ENCODE measurements at regions of chr16 and their contacts with region 1.

Region 1: DNA sequence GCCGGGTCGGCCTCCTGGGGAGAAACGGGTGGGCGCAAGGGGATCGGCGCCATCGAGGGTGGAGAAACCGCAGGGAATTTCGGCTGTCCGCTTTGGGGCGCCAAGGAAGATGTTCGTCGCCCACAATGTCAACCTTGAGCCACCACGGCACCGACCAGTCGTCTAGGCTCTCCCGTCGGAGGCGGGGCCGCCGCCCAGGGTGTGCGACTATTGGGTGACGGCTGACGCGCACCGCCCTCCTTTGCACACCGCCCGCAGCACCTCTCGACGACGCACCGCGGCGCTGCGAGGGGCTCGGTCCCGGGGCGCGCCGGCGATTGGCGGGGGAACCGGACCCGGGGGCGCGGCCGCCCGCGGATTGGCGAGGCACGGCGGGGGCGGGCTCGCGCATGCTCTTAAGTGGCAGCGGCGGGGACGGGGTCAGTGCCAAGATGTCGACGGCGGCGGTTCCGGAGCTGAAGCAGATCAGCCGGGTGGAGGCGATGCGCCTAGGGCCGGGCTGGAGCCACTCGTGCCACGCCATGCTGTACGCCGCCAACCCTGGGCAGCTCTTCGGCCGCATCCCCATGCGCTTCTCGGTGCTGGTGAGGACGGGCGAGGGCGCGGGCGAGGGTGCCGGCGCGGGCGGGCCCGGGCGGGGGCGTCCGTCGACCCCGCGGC is at the start of gene NUDT16L1:
- DNase-seq: peak; percentile 98
- ATAC-seq: peak; percentile 95
- H3K4me3 Mint-ChIP-seq: peak within 1 kb of the TSS; percentile 77
- H3K27ac Mint-ChIP-seq: peak within 1 kb of the TSS; percentile 83
- H3K4me1 Mint-ChIP-seq: peaks cover 17% of the 10 kb centered on the region
- H3K27me3 Mint-ChIP-seq: no peaks in the 10 kb centered on the region
- total RNA-seq, gene NUDT16L1: 16.4 to 22.5 TPM

Region 2: GRCh38 chr16:4494746-4495490 is 198.5 kb before region 1 on chr16:
- CTCF ChIA-PET with region 1: no interaction called
- POLR2A ChIA-PET with region 1: no interaction called
- intact Hi-C with region 1: no loop called
- DNase-seq: no peak
- ATAC-seq: no peak
- H3K4me3 Mint-ChIP-seq: no peak overlapping the region
- H3K27ac Mint-ChIP-seq: peak overlapping the region; percentile 14
- H3K4me1 Mint-ChIP-seq: peaks cover 77% of the 10 kb centered on the region
- H3K27me3 Mint-ChIP-seq: no peaks in the 10 kb centered on the region

Region 3: GRCh38 chr16:4660454-4661007 is 32.9 kb before region 1 on chr16:
- CTCF ChIA-PET with region 1: interaction called, 3 read pairs
- POLR2A ChIA-PET with region 1: interaction called, 3 read pairs
- intact Hi-C with region 1: loop called in 1 of 2 experiments (anchors 1 kb)
- DNase-seq: peak; percentile 94
- ATAC-seq: peak; percentile 82
- H3K4me3 Mint-ChIP-seq: no peak overlapping the region
- H3K27ac Mint-ChIP-seq: peak overlapping the region; percentile 68
- H3K4me1 Mint-ChIP-seq: peaks cover 70% of the 10 kb centered on the region
- H3K27me3 Mint-ChIP-seq: no peaks in the 10 kb centered on the region

Region 4: GRCh38 chr16:4679850-4680636 is 13.4 kb before region 1 on chr16:
- CTCF ChIA-PET with region 1: interaction called, 6 read pairs
- POLR2A ChIA-PET with region 1: no interaction called
- intact Hi-C with region 1: loop called in 1 of 2 experiments (anchors 1 kb)
- DNase-seq: peak; percentile 17
- ATAC-seq: no peak
- H3K4me3 Mint-ChIP-seq: no peak overlapping the region
- H3K27ac Mint-ChIP-seq: peak overlapping the region; percentile 31
- H3K4me1 Mint-ChIP-seq: peaks cover 27% of the 10 kb centered on the region
- H3K27me3 Mint-ChIP-seq: no peaks in the 10 kb centered on the region

Region 5: GRCh38 chr16:4752351-4753100 is 59.1 kb after region 1 on chr16:
- CTCF ChIA-PET with region 1: no interaction called
- POLR2A ChIA-PET with region 1: no interaction called
- intact Hi-C with region 1: no loop called
- DNase-seq: no peak
- ATAC-seq: no peak
- H3K4me3 Mint-ChIP-seq: no peak overlapping the region
- H3K27ac Mint-ChIP-seq: no peak overlapping the region
- H3K4me1 Mint-ChIP-seq: no peaks in the 10 kb centered on the region
- H3K27me3 Mint-ChIP-seq: no peaks in the 10 kb centered on the region

Region 6: DNA sequence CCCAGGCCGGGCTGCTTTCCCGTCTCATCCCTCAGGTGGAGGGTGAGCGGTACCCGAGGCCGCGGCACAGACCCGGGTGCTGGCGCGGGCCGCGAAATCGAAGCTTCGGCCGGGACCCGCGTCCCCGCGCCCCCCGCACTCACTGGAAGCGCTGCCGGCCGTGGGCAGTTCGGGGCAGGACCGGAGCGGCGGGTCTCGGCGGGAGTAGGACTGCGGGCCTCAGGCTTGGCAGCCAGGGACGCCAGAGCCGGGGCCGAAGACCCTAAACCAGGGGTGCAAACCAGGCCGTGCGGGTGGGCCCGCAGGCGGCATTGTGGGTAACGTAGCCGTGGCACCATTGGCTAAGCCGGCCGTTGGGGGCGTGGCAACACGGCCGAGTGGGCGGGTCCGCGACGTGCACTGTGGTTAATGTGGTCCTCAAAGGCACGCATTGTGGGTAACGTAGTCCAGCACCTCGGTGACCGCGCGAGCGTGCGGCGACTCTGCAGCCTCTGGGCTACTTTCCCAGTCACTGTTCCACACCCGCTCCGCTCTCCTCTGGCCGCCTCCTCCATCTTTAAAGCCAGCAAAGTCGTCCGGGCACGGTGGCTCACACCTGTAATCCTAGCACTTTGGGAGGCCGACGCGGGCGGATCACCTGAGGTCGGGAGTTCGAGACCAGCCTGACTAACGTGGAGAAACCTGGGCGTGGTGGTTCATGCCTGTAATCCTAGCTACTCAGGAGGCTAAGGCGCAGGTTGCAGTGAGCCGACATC is 73.6 kb after region 1 on chr16 and contains the start of gene ZNF500:
- CTCF ChIA-PET with region 1: no interaction called
- POLR2A ChIA-PET with region 1: no interaction called
- intact Hi-C with region 1: loop called in 1 of 2 experiments (anchors 1 kb)
- DNase-seq: peak; percentile 97
- ATAC-seq: peak; percentile 78
- H3K4me3 Mint-ChIP-seq: peak within 1 kb of the TSS; percentile 89
- H3K27ac Mint-ChIP-seq: peak within 1 kb of the TSS; percentile 91
- H3K4me1 Mint-ChIP-seq: peaks cover 25% of the 10 kb centered on the region
- H3K27me3 Mint-ChIP-seq: no peaks in the 10 kb centered on the region
- total RNA-seq, gene ZNF500: 10.3 to 11.6 TPM

Region 7: GRCh38 chr16:4802659-4803287 is 109.3 kb after region 1 on chr16:
- CTCF ChIA-PET with region 1: no interaction called
- POLR2A ChIA-PET with region 1: no interaction called
- intact Hi-C with region 1: loop called in 1 of 2 experiments (anchors 1 kb)
- DNase-seq: peak; percentile 92
- ATAC-seq: peak; percentile 98
- H3K4me3 Mint-ChIP-seq: peak overlapping the region; percentile 74
- H3K27ac Mint-ChIP-seq: peak overlapping the region; percentile 58
- H3K4me1 Mint-ChIP-seq: peaks cover 14% of the 10 kb centered on the region
- H3K27me3 Mint-ChIP-seq: no peaks in the 10 kb centered on the region

Region 8: DNA sequence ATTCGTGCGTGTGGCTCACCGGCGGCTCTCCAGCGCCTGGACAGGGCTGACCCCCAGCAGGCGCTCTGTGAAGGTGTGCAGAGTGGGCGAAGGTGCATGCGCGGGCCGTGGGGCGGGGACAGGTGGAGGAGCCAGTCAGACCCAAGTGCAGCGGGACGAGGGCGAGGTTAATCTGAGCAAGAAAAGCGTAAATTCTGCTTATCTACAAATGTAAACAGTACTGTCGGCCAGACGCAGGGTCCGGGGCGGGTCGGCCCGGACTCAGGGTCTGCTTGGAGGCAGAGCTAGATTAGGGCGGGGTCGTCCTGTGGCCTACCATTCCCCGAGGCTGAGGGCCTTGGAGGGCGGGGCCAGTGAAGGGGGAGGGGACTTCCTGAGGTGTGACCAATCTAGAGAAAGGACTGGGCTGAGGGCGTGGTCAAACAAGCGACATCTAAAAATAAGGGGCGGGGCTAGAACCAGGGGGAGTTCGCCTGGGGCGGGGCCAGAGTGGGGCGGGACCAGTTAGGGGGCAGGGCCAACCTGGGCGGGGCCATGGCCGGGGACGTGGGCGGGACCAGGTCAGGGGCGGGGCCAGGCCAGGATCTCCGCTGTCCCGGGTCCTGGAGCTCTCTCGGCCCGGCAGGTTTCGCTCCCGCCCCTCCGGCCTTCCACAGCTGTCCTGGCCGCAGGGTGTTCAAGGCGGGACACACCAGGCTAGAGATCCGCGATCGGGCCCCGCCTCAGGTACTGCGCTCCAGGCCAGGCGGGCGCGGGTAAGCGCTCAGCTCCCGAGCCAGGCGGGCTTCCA is 264.5 kb after region 1 on chr16 and contains the start of gene SEC14L5:
- CTCF ChIA-PET with region 1: interaction called, 3 read pairs
- POLR2A ChIA-PET with region 1: no interaction called
- intact Hi-C with region 1: loop called in 1 of 2 experiments (anchors 1 kb)
- DNase-seq: peak; percentile 98
- ATAC-seq: peak; percentile 95
- H3K4me3 Mint-ChIP-seq: peak within 1 kb of the TSS; percentile 75
- H3K27ac Mint-ChIP-seq: peak within 1 kb of the TSS; percentile 1
- H3K4me1 Mint-ChIP-seq: peaks cover 12% of the 10 kb centered on the region
- H3K27me3 Mint-ChIP-seq: peaks cover 33% of the 10 kb centered on the region
- total RNA-seq, gene SEC14L5: 0.09 to 0.28 TPM

Region 9: DNA sequence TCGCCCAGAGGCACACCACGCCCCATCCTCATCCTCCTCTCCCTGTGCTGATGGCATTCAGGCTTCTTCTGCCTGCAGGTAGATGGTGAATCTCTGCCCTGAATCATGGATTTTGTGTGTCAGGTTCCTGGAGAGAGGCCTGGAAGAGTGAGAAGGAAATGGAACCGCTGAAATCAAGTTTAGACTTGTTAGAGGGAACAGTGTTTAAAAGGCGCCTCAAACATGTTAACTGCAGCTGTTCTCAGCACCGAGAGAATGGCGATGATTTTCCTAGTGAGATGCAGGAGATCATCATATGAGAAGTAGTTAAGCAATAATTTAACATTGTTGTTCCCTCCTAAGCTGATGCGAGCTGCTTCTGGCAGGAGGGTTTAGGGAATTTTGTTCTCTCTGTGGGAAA is 1148.5 kb after region 1 on chr16:
- CTCF ChIA-PET with region 1: no interaction called
- POLR2A ChIA-PET with region 1: no interaction called
- intact Hi-C with region 1: no loop called
- DNase-seq: no peak
- ATAC-seq: no peak
- H3K4me3 Mint-ChIP-seq: no peak overlapping the region
- H3K27ac Mint-ChIP-seq: no peak overlapping the region
- H3K4me1 Mint-ChIP-seq: no peaks in the 10 kb centered on the region
- H3K27me3 Mint-ChIP-seq: no peaks in the 10 kb centered on the region